ENCODE measurements at regions of chr7 and their contacts with region 1.

Region 1: DNA sequence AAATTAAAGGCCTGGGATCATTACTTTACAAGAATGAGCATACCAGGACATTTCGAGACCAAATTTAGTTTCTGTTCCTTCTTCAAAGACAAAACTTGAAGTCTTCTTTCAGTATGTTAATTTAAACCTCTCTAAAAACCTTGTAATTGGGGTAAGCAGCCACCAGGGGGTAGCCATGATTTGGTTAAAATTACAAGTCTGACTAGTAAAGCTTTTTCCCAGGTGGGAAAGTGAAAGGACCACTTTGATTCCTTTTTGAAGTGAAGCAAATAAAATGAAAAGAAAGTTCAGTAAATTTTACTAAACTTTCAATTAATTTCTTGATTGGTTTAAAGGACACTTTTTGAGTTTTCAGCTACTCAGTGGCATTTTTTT is 294.3 kb downstream of the BBS9 start:
- DNase-seq: no peak
- H3K4me3 ChIP-seq: no peak overlapping the region
- H3K27ac ChIP-seq: no peak overlapping the region
- H3K4me1 ChIP-seq: no peaks in the 10 kb centered on the region
- H3K27me3 ChIP-seq: no peaks in the 10 kb centered on the region
- CTCF ChIP-seq: peak in 2 of 4 experiments; percentile 6 to 16
- POLR2A ChIP-seq: no peak

Region 2: GRCh38 chr7:33733870-33734650 is 310.4 kb after region 1 on chr7:
- intact Hi-C with region 1: loop called (anchors 10 kb)
- DNase-seq: no peak
- H3K4me3 ChIP-seq: no peak overlapping the region
- H3K27ac ChIP-seq: no peak overlapping the region
- H3K4me1 ChIP-seq: no peaks in the 10 kb centered on the region
- H3K27me3 ChIP-seq: no peaks in the 10 kb centered on the region
- CTCF ChIP-seq: no peak
- POLR2A ChIP-seq: no peak

Measured in prostate gland (tissue), 2 donors.